ENCODE measurements at regions of chr11 and their contacts with region 1.

Region 1: GRCh38 chr11:101807531-101807930 is 107.3 kb upstream of the CEP126 start:
- DNase-seq: no peak
- ATAC-seq: no peak

Region 2: GRCh38 chr11:101748572-101749344 is 58.8 kb before region 1 on chr11:
- intact Hi-C with region 1: loop called in 1 of 2 experiments (anchors 10 kb)
- DNase-seq: no peak
- ATAC-seq: no peak

Region 3: GRCh38 chr11:101765945-101766344 is 41.6 kb before region 1 on chr11:
- intact Hi-C with region 1: no loop called
- DNase-seq: no peak
- ATAC-seq: no peak

Measured in left cardiac atrium (tissue), 4 donors.